Panc1 (cell line): ENCODE measurements at regions of chr11 and their contacts with region 1.

Region 1: GRCh38 chr11:65711785-65712632 is at the start of gene KAT5:
- DNase-seq: peak; percentile 97
- ATAC-seq: peak; percentile 93
- H3K4me3 ChIP-seq: peak within 1 kb of the TSS; percentile 59 to 84
- H3K27ac ChIP-seq: peak within 1 kb of the TSS; percentile 97
- H3K4me1 ChIP-seq: peaks cover 12% of the 10 kb centered on the region
- H3K27me3 ChIP-seq: no peaks in the 10 kb centered on the region
- CTCF ChIP-seq: peak; percentile 100
- total RNA-seq, gene KAT5: 84.2 TPM

Region 2: GRCh38 chr11:65652511-65653231 is 59.3 kb before region 1 on chr11:
- CTCF ChIA-PET with region 1: interaction called, 11 read pairs
- POLR2A ChIA-PET with region 1: no interaction called
- in situ Hi-C with region 1: no loop called
- intact Hi-C with region 1: no loop called
- DNase-seq: peak; percentile 70
- ATAC-seq: peak; percentile 84
- H3K4me3 ChIP-seq: peak overlapping the region; percentile 48 to 60
- H3K27ac ChIP-seq: peak overlapping the region; percentile 95
- H3K4me1 ChIP-seq: peaks cover 21% of the 10 kb centered on the region
- H3K27me3 ChIP-seq: no peaks in the 10 kb centered on the region
- CTCF ChIP-seq: no peak

Region 3: DNA sequence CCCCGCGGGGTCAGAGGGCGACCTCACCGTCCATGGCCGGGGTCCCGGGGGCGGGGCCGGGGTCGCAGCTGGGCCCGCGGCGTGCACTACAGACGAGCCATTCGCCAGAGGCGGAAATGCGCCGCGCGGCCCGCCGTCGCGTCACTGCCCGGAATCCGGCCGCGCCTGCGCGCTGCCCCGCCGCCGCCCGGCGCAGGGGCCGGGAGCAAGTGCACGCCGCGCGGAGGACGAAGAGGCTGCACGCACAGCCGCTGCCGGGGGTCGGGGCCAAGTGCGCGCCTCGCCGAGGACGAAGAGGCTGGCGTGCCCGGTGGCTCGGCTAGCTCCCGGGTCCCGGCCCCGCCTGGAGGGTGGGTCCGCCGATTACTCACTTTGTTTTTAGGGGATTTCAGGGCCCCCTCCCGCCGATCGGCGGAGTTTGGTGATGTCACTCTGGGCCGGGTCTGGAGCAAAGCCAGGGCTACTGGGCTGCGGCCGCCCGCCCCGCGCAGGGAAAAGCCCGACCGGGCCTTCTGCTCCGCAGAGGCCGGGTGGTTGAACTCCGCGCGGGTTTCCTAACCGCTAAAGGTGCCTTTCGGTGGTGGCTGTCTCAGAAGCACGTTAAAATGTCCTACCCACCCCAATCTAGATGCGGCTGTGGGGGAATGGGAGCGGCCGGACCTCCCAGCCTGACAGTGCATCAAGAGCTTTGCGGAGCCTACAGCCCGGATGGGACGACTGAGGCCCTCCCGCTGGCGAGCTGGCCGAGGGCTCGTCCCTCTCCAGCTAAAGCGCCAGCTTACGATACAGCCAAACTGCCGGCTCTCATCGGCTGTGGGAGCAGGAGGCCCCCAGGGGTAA is 49.0 kb before region 1 on chr11 and contains the start of gene RELA:
- CTCF ChIA-PET with region 1: no interaction called
- POLR2A ChIA-PET with region 1: no interaction called
- in situ Hi-C with region 1: no loop called
- intact Hi-C with region 1: no loop called
- DNase-seq: peak; percentile 85
- ATAC-seq: peak; percentile 92
- H3K4me3 ChIP-seq: peak within 1 kb of the TSS; percentile 81 to 100
- H3K27ac ChIP-seq: peak within 1 kb of the TSS; percentile 93
- H3K4me1 ChIP-seq: peaks cover 11% of the 10 kb centered on the region
- H3K27me3 ChIP-seq: no peaks in the 10 kb centered on the region
- CTCF ChIP-seq: no peak
- total RNA-seq, gene RELA: 141 TPM

Region 4: GRCh38 chr11:65779851-65780577 is 68.0 kb after region 1 on chr11:
- CTCF ChIA-PET with region 1: interaction called, 11 read pairs
- POLR2A ChIA-PET with region 1: no interaction called
- in situ Hi-C with region 1: no loop called
- intact Hi-C with region 1: no loop called
- DNase-seq: peak; percentile 38
- ATAC-seq: peak; percentile 85
- H3K4me3 ChIP-seq: peak overlapping the region; percentile 83 to 88
- H3K27ac ChIP-seq: peak overlapping the region; percentile 85
- H3K4me1 ChIP-seq: peaks cover 10% of the 10 kb centered on the region
- H3K27me3 ChIP-seq: no peaks in the 10 kb centered on the region
- CTCF ChIP-seq: peak; percentile 100

Region 5: GRCh38 chr11:65850831-65851811 is 139.1 kb after region 1 on chr11:
- CTCF ChIA-PET with region 1: interaction called, 12 read pairs
- POLR2A ChIA-PET with region 1: interaction called, 8 read pairs
- in situ Hi-C with region 1: no loop called
- intact Hi-C with region 1: no loop called
- DNase-seq: no peak
- ATAC-seq: peak; percentile 59
- H3K4me3 ChIP-seq: no peak overlapping the region
- H3K27ac ChIP-seq: no peak overlapping the region
- H3K4me1 ChIP-seq: peaks cover 33% of the 10 kb centered on the region
- H3K27me3 ChIP-seq: no peaks in the 10 kb centered on the region
- CTCF ChIP-seq: peak; percentile 91

Region 6: GRCh38 chr11:66001942-66002647 is 290.1 kb after region 1 on chr11 and contains the starts of genes BANF1 and EIF1AD:
- CTCF ChIA-PET with region 1: no interaction called
- POLR2A ChIA-PET with region 1: interaction called, 14 read pairs
- in situ Hi-C with region 1: no loop called
- intact Hi-C with region 1: no loop called
- DNase-seq: peak; percentile 96
- ATAC-seq: peak; percentile 90
- H3K4me3 ChIP-seq: peak within 1 kb of the TSS; percentile 63 to 100
- H3K27ac ChIP-seq: peak within 1 kb of the TSS; percentile 100
- H3K4me1 ChIP-seq: peaks cover 43% of the 10 kb centered on the region
- H3K27me3 ChIP-seq: no peaks in the 10 kb centered on the region
- CTCF ChIP-seq: no peak
- total RNA-seq, gene BANF1: 494 TPM
- total RNA-seq, gene EIF1AD: 64.6 TPM